Activated T-helper 1 cell treated with anti-CD3 and anti-CD28 coated beads, Interleukin-12 subunit alpha, Interleukin-12 subunit beta, Interleukin-2, Interleukin-4 antibody, amounts not matched to agents 30 ng/mL and 10 ng/mL and 1 ng/mL, durations not matched to agents 14 hours and 24 hours and 36 hours (primary cell): ENCODE measurements at regions of chr16 and their contacts with region 1.

Region 1: DNA sequence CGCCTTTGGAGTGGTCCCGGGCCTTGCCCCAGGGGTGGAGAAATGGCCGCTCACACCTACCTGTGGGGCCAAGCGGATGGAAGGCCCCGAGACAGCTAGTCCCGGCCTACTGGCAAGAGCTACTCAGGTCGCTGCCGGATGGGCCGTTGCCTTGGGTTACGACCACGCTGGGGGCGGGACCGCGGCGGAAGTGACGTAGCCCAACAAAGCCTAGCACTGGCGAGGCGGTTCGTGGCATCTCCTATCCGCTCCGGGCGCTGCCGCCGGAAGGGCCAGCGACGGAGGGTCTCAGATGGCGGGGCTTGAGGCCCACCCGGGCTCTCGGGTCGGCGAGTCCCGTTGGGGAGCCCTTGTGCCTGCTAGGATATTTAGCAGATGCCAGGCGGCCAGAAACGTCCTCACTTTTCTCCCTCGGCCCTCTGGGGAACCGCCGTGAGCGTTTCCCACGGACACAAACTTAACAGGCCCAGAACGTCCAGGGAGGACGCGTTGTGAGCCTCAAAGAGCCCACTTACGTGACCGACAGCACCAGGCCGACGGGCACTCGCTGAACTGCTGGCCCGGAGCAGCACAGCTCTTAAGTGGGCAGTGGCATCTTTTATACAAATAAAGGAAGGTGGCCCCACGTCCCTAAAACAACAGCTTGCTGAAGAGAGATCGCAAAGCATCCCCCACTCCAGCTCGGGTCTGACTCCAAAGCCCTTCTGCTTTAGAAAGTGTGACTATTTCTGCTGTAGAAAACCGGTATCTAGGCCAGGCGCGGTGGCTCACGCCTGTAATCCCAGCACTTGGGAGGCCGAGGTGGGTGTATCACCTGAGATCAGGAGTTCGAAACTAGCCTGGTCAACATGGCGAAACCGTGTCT is at the start of gene C16orf46:
- DNase-seq: peak; percentile 96
- H3K4me3 Mint-ChIP-seq: peak within 1 kb of the TSS; percentile 32
- H3K27ac Mint-ChIP-seq: peak within 1 kb of the TSS; percentile 24
- H3K4me1 Mint-ChIP-seq: no peaks in the 10 kb centered on the region
- H3K27me3 Mint-ChIP-seq: peaks cover 3% of the 10 kb centered on the region
- total RNA-seq, gene C16orf46: 0.32 and 0.41 TPM in 2 replicates

Region 2: GRCh38 chr16:80540516-80541272 is 536.6 kb before region 1 on chr16 and contains the start of gene DYNLRB2:
- intact Hi-C with region 1: loop called (anchors 2 kb)
- DNase-seq: peak; percentile 92
- H3K4me3 Mint-ChIP-seq: peak within 1 kb of the TSS; percentile 87
- H3K27ac Mint-ChIP-seq: peak within 1 kb of the TSS; percentile 96
- H3K4me1 Mint-ChIP-seq: peaks cover 38% of the 10 kb centered on the region
- H3K27me3 Mint-ChIP-seq: peaks cover 2% of the 10 kb centered on the region
- total RNA-seq, gene DYNLRB2: not detected in 2 replicates

Region 3: DNA sequence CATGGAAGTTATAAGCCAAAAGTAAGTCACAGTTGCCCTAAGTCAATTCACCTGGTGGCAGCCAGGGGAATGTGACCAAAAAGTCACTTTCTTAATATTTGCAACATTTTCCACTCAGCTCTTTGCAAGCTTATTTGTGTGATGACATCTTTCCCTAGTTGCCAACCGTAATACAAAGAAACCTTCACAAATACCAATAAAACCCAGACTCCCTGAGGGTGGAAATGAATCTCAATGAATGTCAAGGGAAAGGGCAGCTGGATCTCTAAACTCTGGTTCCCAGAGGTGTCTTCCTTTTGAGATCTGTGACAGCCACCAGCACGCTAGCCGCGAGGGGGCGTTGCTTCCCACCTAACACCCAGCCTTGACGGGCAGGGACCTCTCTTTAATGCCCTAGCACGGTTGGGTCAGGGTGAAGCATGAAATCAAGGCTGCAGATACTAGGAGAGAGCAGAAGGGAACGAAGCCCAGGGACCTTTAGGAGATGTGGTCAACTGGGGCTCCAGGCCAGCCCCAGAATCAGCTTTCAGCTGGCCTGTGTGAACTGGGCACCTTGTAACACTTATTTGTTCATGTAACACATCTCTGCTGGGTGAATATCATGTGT is 152.8 kb before region 1 on chr16:
- intact Hi-C with region 1: no loop called
- DNase-seq: no peak
- H3K4me3 Mint-ChIP-seq: no peak overlapping the region
- H3K27ac Mint-ChIP-seq: no peak overlapping the region
- H3K4me1 Mint-ChIP-seq: no peaks in the 10 kb centered on the region
- H3K27me3 Mint-ChIP-seq: peaks cover 5% of the 10 kb centered on the region

Region 4: DNA sequence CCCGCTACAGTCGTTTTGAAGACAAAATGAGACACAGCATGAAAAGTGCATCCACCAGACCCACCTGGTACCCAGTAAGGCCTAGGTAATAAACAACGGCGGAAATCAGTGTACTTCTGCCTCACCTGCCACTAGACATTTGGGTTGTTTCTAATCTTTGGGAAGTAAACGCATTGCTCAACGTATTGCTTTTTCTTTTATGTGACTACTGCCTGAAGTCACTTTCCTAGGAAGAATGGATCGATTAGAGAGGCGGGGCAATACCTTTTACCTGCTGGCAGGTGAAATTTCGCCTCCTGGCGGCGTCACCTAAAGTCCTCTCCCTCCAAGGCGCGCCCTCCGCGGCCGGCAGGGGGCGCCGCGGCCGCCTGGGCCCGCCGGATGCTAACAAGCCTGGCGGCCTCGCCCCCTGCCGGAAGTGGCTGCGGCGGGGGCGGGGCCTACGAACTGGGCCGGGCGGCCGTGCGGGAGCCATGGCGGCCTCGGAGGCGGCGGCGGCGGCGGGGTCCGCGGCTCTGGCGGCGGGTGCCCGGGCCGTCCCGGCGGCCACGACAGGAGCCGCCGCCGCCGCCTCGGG is 41.8 kb before region 1 on chr16 and contains the start of gene ATMIN:
- intact Hi-C with region 1: loop called (anchors 1 kb)
- DNase-seq: peak; percentile 85
- H3K4me3 Mint-ChIP-seq: peak within 1 kb of the TSS; percentile 88
- H3K27ac Mint-ChIP-seq: peak within 1 kb of the TSS; percentile 65
- H3K4me1 Mint-ChIP-seq: peaks cover 27% of the 10 kb centered on the region
- H3K27me3 Mint-ChIP-seq: no peaks in the 10 kb centered on the region
- total RNA-seq, gene ATMIN: 31.2 and 32.3 TPM in 2 replicates

Region 5: GRCh38 chr16:81444448-81445121 is 367.3 kb after region 1 on chr16 and contains the start of gene CMIP:
- intact Hi-C with region 1: loop called (anchors 2 kb)
- DNase-seq: peak; percentile 78
- H3K4me3 Mint-ChIP-seq: peak within 1 kb of the TSS; percentile 88
- H3K27ac Mint-ChIP-seq: peak within 1 kb of the TSS; percentile 93
- H3K4me1 Mint-ChIP-seq: peaks cover 48% of the 10 kb centered on the region
- H3K27me3 Mint-ChIP-seq: peaks cover 28% of the 10 kb centered on the region
- total RNA-seq, gene CMIP: 45.4 and 45.8 TPM in 2 replicates

Region 6: GRCh38 chr16:81745704-81746558 is 668.6 kb after region 1 on chr16:
- intact Hi-C with region 1: loop called (anchors 1 kb)
- DNase-seq: peak; percentile 65
- H3K4me3 Mint-ChIP-seq: peak overlapping the region; percentile 58
- H3K27ac Mint-ChIP-seq: peak overlapping the region; percentile 81
- H3K4me1 Mint-ChIP-seq: peaks cover 35% of the 10 kb centered on the region
- H3K27me3 Mint-ChIP-seq: no peaks in the 10 kb centered on the region